ENCODE measurements at regions of chr17 and their contacts with region 1.

Region 1: DNA sequence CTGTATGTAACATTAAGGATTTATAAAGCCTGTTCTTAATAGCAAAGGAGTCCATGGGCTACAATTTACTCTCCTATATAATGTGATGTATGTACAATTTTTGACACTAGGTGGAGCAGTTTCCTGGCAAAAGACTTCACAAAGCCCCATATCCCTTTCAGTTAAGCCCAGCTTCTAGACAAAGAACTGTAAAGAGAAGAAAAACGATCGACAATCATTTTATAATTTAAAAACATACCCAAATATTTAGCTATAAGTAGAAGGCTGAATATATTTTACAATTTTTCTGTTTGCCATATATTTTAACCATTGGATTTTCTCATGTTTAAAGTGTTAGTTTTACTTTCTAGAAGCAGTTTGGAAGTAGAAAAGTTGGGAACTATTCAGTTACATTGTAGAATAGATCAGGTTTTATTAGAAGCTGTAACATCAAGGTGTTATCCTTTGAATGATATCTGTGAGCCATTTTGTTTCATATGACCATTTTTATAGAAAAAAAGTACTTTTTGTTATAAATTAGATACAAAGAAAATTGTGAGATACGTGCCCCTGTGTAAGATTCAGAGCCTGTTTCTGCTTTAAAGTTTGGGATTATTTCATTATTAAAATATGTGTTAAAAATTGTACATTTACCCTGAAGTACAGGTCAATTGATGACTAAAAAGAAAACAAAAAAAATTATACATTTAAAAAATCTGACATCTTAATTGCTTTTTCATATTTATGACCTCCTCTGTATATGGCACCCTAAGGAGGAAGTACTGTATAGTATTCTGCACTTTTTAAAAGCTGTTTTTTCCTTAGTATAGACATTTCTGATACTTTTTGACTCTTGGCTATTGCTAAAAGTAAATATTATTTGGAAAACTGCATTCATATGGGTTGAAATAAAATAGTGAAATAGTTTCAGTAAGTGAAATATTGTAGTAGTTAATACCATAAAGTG is 46.3 kb downstream of the VMP1 start:
- DNase-seq: peak; percentile 73
- ATAC-seq: peak; percentile 91
- H3K4me3 ChIP-seq: no peak overlapping the region
- H3K27ac ChIP-seq: peak overlapping the region; percentile 33; the same call in 1 of the 2 replicates
- H3K4me1 ChIP-seq: peaks cover 13% of the 10 kb centered on the region
- H3K27me3 ChIP-seq: no peaks in the 10 kb centered on the region
- CTCF ChIP-seq: peak; percentile 54 to 82 (median 62)
- EP300 ChIP-seq: no peak
- POLR2A ChIP-seq: no peak
- RAD21 ChIP-seq: peak; percentile 96

Region 2: DNA sequence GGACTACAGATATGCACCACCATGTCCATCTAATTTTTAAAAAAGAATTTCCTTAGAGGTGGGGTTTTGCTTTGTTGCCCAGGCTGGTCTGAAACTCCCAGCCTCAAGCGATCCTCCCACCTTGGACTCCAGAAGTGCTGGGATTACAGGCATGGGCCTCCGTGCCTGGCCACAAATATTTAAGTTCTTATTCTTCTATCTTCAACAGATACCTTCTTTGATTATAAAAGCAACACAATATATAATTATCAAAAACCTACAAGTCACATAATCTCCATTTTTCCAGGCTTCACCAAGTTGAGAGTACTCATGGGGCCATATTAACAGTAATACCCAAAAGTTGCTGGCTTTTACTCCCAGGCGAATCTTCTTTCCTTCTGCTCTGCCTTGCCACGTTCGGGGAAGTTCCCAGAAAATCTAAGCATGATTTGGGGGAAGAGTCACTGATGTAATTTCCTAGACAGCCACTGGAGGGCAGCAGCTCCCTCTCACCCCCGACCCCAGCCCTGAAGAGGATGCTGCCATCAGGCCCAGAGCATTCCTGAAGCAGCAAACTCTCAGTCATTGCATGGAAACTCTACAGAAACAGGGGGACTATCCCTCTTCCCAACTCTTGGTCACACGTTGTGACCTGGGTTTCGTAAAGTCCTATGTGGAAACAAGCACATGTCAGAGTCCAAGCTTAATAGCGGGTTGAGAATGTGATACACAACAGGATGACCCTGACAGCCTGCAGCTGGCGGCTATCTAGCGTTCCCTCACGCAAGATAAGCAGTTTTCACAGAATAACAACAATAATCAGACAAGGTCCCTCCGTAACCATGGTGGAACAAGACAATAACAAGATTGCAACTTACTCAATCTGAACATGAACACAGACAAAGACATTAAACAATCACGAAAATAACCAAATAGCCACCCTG is 232.3 kb before region 1 on chr17:
- CTCF ChIA-PET with region 1: interaction called, 3 read pairs
- POLR2A ChIA-PET with region 1: no interaction called
- RAD21 ChIA-PET with region 1: interaction called, 11 read pairs
- SMC1A ChIA-PET with region 1: no interaction called
- in situ Hi-C with region 1: no loop called
- intact Hi-C with region 1: no loop called
- DNase-seq: peak; percentile 19
- ATAC-seq: peak; percentile 91
- H3K4me3 ChIP-seq: no peak overlapping the region
- H3K27ac ChIP-seq: no peak overlapping the region
- H3K4me1 ChIP-seq: no peaks in the 10 kb centered on the region
- H3K27me3 ChIP-seq: peaks cover 0 to 2% of the 10 kb centered on the region in 2 experiments; a peak in 1 of 4 replicates
- CTCF ChIP-seq: peak; percentile 83 to 94 (median 90)
- EP300 ChIP-seq: no peak
- POLR2A ChIP-seq: no peak
- RAD21 ChIP-seq: peak; percentile 84

Region 3: GRCh38 chr17:59778996-59779395 is 25.2 kb after region 1 on chr17:
- CTCF ChIA-PET with region 1: interaction called, 47 read pairs
- POLR2A ChIA-PET with region 1: interaction called, 6 read pairs
- RAD21 ChIA-PET with region 1: interaction called, 72 read pairs
- SMC1A ChIA-PET with region 1: interaction called, 75 read pairs
- in situ Hi-C with region 1: no loop called
- intact Hi-C with region 1: no loop called
- DNase-seq: no peak
- ATAC-seq: no peak; the same call in 2 of the 3 replicates
- H3K4me3 ChIP-seq: no peak overlapping the region
- H3K27ac ChIP-seq: no peak overlapping the region
- H3K4me1 ChIP-seq: peaks cover 6% of the 10 kb centered on the region
- H3K27me3 ChIP-seq: no peaks in the 10 kb centered on the region
- CTCF ChIP-seq: no peak
- EP300 ChIP-seq: no peak
- POLR2A ChIP-seq: no peak
- RAD21 ChIP-seq: no peak

Region 4: DNA sequence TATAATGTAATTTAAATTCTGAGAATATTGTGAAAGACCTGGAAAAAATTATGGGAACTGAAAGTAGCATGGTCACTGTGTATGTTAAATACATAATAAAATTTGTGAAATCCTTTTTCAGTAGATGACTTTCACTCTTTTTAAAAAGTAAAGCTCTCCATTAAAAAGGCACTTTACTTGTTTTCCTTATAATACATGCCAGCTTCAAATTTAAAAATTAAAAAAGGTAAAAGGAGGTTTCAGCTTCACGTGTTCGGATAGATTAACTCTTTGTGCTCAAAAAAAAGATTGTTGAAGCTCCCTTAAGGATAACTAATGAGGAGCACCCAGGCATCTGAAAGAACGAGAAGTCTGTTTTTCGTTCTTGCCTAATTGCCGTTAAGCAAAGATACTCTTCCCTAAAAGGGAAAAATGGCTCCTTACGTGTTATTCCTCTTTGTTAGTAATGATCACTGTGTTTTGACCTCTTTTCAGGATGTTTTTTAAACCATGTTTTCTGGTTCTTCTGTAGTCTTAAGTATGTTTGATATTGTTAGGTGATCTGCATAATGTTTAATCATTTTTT is 51.2 kb after region 1 on chr17:
- CTCF ChIA-PET with region 1: interaction called, 10 read pairs
- POLR2A ChIA-PET with region 1: interaction called, 3 read pairs
- RAD21 ChIA-PET with region 1: interaction called, 14 read pairs
- SMC1A ChIA-PET with region 1: interaction called, 7 read pairs
- in situ Hi-C with region 1: no loop called
- intact Hi-C with region 1: no loop called
- DNase-seq: no peak
- ATAC-seq: peak; percentile 61
- H3K4me3 ChIP-seq: peak overlapping the region; percentile 33
- H3K27ac ChIP-seq: peak overlapping the region; percentile 90
- H3K4me1 ChIP-seq: peaks cover 3% of the 10 kb centered on the region; the same call in 1 of the 2 replicates
- H3K27me3 ChIP-seq: no peaks in the 10 kb centered on the region
- CTCF ChIP-seq: no peak
- EP300 ChIP-seq: no peak
- POLR2A ChIP-seq: no peak
- RAD21 ChIP-seq: no peak

Region 5: GRCh38 chr17:59837308-59838051 is 83.7 kb after region 1 on chr17:
- CTCF ChIA-PET with region 1: interaction called, 75 read pairs
- POLR2A ChIA-PET with region 1: interaction called, 23 read pairs
- RAD21 ChIA-PET with region 1: interaction called, 142 read pairs
- SMC1A ChIA-PET with region 1: interaction called, 127 read pairs
- in situ Hi-C with region 1: no loop called
- intact Hi-C with region 1: no loop called
- DNase-seq: peak; percentile 97
- ATAC-seq: peak; percentile 70
- H3K4me3 ChIP-seq: peak overlapping the region; percentile 91
- H3K27ac ChIP-seq: peak overlapping the region; percentile 97
- H3K4me1 ChIP-seq: peaks cover 35% of the 10 kb centered on the region
- H3K27me3 ChIP-seq: no peaks in the 10 kb centered on the region
- CTCF ChIP-seq: no peak
- EP300 ChIP-seq: peak in 1 of 2 experiments; percentile 70; a peak in 2 of 4 replicates
- POLR2A ChIP-seq: peak; percentile 94
- RAD21 ChIP-seq: no peak

Region 6: DNA sequence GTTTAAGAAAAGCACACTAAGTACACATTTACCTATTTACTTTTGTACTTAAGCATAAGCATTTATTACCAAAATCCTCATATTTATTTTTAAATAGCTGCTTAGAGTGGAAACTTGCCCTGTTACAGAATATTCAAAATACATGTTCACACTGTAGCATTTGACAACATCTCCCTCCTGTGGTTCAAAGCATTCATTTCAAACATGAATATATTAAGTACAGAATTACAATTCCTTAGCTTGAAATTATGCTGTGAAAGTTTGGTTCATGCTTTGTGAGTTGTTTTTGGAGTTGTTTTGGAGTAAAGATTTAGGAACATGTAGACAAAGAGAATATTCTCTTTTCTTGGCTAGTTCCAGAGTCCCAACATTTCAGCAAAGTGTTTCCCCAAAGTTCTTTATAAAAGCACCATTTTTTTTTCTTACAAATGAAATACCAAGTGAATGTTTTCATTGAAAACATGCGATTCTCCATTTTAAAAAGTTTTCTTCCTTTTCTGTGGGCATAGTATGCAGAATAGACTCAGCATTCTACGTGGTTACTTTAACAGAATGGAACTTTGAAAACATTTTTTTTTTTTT is 105.7 kb after region 1 on chr17:
- CTCF ChIA-PET with region 1: interaction called, 10 read pairs
- POLR2A ChIA-PET with region 1: interaction called, 27 read pairs
- RAD21 ChIA-PET with region 1: interaction called, 3 read pairs
- SMC1A ChIA-PET with region 1: interaction called, 5 read pairs
- in situ Hi-C with region 1: no loop called
- intact Hi-C with region 1: loop called (anchors 1 kb)
- DNase-seq: no peak
- ATAC-seq: peak; percentile 84
- H3K4me3 ChIP-seq: no peak overlapping the region
- H3K27ac ChIP-seq: no peak overlapping the region
- H3K4me1 ChIP-seq: no peaks in the 10 kb centered on the region
- H3K27me3 ChIP-seq: no peaks in the 10 kb centered on the region
- CTCF ChIP-seq: peak; percentile 47 to 73 (median 48); a peak in 5 of 6 replicates
- EP300 ChIP-seq: no peak
- POLR2A ChIP-seq: no peak
- RAD21 ChIP-seq: peak; percentile 95

Region 7: GRCh38 chr17:59914274-59914854 is 160.6 kb after region 1 on chr17:
- CTCF ChIA-PET with region 1: interaction called, 49 read pairs
- POLR2A ChIA-PET with region 1: no interaction called
- RAD21 ChIA-PET with region 1: interaction called, 21 read pairs
- SMC1A ChIA-PET with region 1: interaction called, 40 read pairs
- in situ Hi-C with region 1: no loop called
- intact Hi-C with region 1: loop called (anchors 5 kb)
- DNase-seq: no peak
- ATAC-seq: peak; percentile 77
- H3K4me3 ChIP-seq: no peak overlapping the region
- H3K27ac ChIP-seq: no peak overlapping the region
- H3K4me1 ChIP-seq: no peaks in the 10 kb centered on the region
- H3K27me3 ChIP-seq: no peaks in the 10 kb centered on the region
- CTCF ChIP-seq: peak; percentile 42 to 54 (median 47); a peak in 5 of 6 replicates
- EP300 ChIP-seq: no peak
- POLR2A ChIP-seq: no peak
- RAD21 ChIP-seq: peak; percentile 53